ENCODE measurements at regions of chr15 and their contacts with region 1.

Region 1: DNA sequence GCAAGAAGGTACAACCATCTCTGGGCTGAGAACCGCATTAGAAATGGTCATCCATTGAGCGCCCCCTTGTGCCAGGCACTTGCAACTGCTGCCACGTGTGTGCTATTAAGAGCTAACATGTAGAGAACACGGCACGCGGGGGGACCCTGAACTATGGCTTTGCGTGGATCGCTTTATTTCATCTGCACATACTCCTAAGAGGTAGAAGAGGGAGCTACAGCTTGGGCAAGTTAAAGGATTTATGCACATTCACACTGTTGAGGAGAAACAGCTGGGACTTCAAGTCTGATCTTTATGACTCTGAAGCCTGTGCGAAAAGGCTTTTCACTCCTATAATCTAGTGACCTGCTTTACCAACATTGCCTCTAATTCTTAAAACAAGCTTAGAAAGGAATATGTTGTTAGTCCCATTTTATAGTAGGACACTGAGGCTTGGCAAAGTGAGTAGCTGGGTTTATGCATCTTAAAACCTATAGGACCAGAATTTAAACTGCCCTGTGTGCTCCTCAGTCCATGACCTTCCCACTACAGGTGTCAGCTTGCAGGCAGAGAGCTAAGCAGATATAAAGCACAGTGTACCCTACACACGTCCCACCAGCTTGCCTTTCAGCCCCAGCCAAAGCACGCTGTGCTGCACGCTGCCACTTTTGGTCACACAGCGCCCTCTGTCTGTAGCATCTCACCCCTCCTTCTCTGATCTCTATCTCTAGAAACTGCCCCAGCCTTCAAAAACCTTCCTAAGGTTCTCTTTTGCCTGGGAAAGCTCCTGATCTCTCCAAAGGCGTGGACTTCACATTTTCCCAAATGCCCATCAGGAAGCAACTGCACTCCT is 57.8 kb downstream of the STARD5 start:
- DNase-seq: peak; percentile 63 to 84 (median 71)
- H3K4me3 ChIP-seq: peak overlapping the region; percentile 35
- H3K4me3 Mint-ChIP-seq: peak overlapping the region; percentile 4 to 82 (median 78)
- H3K27ac ChIP-seq: no peak overlapping the region
- H3K27ac Mint-ChIP-seq: peak overlapping the region in 4 of 8 donors; percentile 25 to 71 (median 48)
- H3K4me1 ChIP-seq: peaks cover 17% of the 10 kb centered on the region
- H3K4me1 Mint-ChIP-seq: peaks cover 16 to 19% (median 18%) of the 10 kb centered on the region in 3 donors
- H3K27me3 ChIP-seq: no peaks in the 10 kb centered on the region
- H3K27me3 Mint-ChIP-seq: peaks cover 3 to 11% of the 10 kb centered on the region in 2 donors

Region 2: DNA sequence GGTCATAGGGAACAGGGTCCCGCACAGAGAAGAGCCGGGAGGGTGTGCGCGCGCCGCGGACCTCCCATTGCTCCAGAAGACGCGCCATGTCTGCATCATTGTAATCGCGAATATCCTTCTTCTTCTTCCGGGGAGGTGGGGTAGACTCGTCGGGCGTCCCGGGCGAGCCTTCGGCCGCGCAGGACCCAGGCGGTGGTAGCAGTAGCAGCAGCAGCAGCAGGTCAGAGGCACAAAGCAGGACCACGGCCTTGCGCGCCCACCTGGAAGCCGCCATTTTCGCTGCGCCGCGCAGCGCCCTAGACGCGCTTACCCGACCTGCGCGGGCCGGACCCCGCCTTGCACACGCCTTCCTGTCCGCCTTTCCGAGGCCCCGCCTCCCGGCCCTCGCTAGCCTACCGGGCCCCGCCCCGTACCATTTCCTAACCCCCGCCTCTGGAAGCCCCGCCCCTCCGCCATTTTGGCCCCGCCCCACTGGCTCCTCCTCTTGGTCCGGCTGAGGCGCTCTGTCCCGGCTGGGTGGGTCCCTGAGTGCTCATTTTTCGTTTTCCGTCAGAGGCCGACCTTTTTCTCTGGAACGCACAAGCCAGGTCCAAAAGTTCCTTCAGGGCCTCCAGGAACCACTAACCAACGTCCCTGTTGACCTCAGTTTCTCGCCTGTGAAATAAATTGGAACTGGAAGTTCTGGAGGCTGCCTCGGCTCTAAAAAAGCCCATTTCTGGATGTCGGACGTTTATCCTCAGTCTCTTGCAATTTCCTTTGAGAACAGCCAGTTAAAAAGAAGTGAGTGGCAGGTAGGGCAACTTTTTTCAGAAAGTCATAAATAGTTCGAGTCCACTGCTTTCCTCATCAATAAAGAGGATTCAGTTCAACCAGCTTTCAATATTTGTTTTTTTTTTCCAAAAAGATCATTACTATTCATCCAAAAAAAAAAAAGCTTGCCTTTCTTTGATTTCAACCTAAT is 276.4 kb before region 1 on chr15 and contains the start of gene MESD:
- CTCF ChIA-PET with region 1: interaction called, 16 read pairs
- POLR2A ChIA-PET with region 1: no interaction called
- DNase-seq: peak; percentile 93 to 97 (median 97)
- H3K4me3 ChIP-seq: peak within 1 kb of the TSS; percentile 72
- H3K4me3 Mint-ChIP-seq: peak within 1 kb of the TSS; percentile 97 to 99 (median 98)
- H3K27ac ChIP-seq: peak within 1 kb of the TSS; percentile 88
- H3K27ac Mint-ChIP-seq: peak within 1 kb of the TSS; percentile 91 to 99 (median 99)
- H3K4me1 ChIP-seq: peaks cover 61% of the 10 kb centered on the region
- H3K4me1 Mint-ChIP-seq: peaks cover 44 to 61% (median 57%) of the 10 kb centered on the region in 3 donors
- H3K27me3 ChIP-seq: no peaks in the 10 kb centered on the region
- H3K27me3 Mint-ChIP-seq: no peaks in the 10 kb centered on the region
- total RNA-seq, gene MESD: 25.7 to 30.5 TPM

Region 3: DNA sequence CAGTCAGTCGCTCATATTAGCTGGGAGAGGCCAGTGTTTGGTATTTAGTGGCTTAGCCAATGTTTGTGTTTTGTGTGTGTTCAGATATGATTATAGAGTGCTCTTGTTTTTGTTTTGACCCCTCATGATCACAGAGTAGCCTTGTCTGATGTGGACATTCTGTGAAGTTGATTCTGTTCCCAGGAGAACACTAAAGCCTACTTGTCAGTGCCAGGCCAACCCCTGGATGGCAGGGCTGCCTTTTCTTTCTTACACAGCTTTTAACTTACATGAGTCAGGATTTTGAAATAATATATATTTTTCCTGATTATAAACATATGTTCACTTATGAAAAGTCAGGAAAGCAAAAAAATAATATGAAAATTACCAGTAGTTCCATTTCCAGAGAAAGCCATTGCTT is 120.2 kb before region 1 on chr15:
- CTCF ChIA-PET with region 1: interaction called, 11 read pairs
- POLR2A ChIA-PET with region 1: no interaction called
- DNase-seq: no peak
- H3K4me3 ChIP-seq: no peak overlapping the region
- H3K4me3 Mint-ChIP-seq: no peak overlapping the region
- H3K27ac ChIP-seq: no peak overlapping the region
- H3K27ac Mint-ChIP-seq: peak overlapping the region in 1 of 8 donors; percentile 20
- H3K4me1 ChIP-seq: no peaks in the 10 kb centered on the region
- H3K4me1 Mint-ChIP-seq: no peaks in the 10 kb centered on the region
- H3K27me3 ChIP-seq: no peaks in the 10 kb centered on the region
- H3K27me3 Mint-ChIP-seq: peaks cover 13 to 36% of the 10 kb centered on the region in 2 donors

Region 4: DNA sequence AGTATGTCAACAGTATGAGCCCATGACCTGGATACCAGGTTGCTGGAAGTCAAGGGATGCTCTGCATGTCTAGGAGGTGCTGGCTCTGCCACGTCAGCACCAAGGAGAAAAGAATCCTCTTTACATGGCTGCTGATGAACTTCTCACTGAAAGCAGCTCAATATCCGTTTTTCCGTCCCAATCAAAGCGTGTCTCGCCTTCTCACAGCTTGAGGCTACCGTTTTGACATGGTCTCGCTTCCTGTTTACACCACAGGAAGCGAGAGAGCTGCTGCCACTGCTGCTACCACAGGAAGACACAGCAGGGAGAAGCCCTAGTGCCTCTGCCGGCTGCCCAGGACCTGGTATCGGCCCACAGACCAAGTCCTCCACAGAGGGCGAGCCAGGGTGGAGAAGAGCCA is 30.5 kb after region 1 on chr15:
- CTCF ChIA-PET with region 1: interaction called, 37 read pairs
- POLR2A ChIA-PET with region 1: interaction called, 5 read pairs
- DNase-seq: peak; percentile 53 to 85 (median 83)
- H3K4me3 ChIP-seq: peak overlapping the region; percentile 89
- H3K4me3 Mint-ChIP-seq: peak overlapping the region; percentile 96 to 100 (median 99)
- H3K27ac ChIP-seq: peak overlapping the region; percentile 61
- H3K27ac Mint-ChIP-seq: peak overlapping the region; percentile 91 to 100 (median 98)
- H3K4me1 ChIP-seq: peaks cover 59% of the 10 kb centered on the region
- H3K4me1 Mint-ChIP-seq: peaks cover 65 to 66% (median 65%) of the 10 kb centered on the region in 3 donors
- H3K27me3 ChIP-seq: no peaks in the 10 kb centered on the region
- H3K27me3 Mint-ChIP-seq: peaks cover 0 to 2% of the 10 kb centered on the region in 2 donors

Region 5: GRCh38 chr15:81336568-81336967 is 70.4 kb after region 1 on chr15:
- CTCF ChIA-PET with region 1: interaction called, 37 read pairs
- POLR2A ChIA-PET with region 1: no interaction called
- DNase-seq: peak; percentile 13 to 59 (median 31)
- H3K4me3 ChIP-seq: no peak overlapping the region
- H3K4me3 Mint-ChIP-seq: no peak overlapping the region
- H3K27ac ChIP-seq: no peak overlapping the region
- H3K27ac Mint-ChIP-seq: peak overlapping the region in 3 of 8 donors; percentile 13 to 66 (median 60)
- H3K4me1 ChIP-seq: peaks cover 2% of the 10 kb centered on the region
- H3K4me1 Mint-ChIP-seq: peaks cover 0 to 5% (median 5%) of the 10 kb centered on the region in 3 donors
- H3K27me3 ChIP-seq: no peaks in the 10 kb centered on the region
- H3K27me3 Mint-ChIP-seq: no peaks in the 10 kb centered on the region